ENCODE measurements at regions of chr1 and their contacts with region 1.

Region 1: DNA sequence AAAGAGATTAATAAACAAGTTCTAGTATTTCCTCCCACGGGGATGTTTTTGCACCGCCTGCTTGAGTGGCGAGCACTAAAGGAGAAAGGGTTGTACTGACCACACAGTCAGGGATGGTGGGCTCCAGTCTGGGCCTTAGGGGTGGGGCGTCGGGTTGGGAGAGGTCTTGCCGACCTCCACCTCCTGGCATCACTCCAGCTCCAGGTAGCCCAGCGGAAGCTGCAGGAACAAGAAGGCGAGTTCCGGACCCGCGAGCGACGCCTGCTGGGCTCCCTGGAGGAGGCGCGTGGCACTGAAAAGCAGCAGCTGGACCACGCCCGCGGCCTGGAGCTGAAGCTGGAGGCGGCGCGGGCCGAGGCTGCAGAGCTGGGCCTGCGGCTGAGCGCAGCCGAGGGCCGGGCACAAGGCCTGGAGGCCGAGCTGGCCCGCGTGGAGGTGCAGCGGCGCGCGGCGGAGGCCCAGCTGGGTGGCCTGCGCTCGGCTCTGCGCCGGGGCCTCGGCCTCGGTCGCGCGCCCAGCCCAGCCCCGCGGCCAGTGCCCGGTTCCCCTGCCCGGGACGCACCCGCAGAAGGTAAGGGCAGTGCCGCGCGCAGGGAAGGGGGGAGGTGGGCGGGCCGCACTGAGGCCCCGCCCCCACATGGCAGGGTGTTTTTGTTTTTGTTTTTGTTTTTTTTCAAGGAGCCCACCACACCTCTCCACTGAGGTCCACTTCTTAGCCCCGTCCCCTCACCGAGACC is 19.7 kb downstream of the MFAP2 start:
- DNase-seq: peak; percentile 73
- H3K4me3 ChIP-seq: peak overlapping the region; percentile 26
- H3K27ac ChIP-seq: no peak overlapping the region
- H3K4me1 ChIP-seq: peaks cover 4% of the 10 kb centered on the region
- CTCF ChIP-seq: peak; percentile 74

Region 2: GRCh38 chr1:16921391-16922185 is 39.1 kb before region 1 on chr1 and contains the start of gene CROCC:
- CTCF ChIA-PET with region 1: interaction called, 5 read pairs
- POLR2A ChIA-PET with region 1: no interaction called
- intact Hi-C with region 1: loop called (anchors 2 kb)
- DNase-seq: peak; percentile 82
- H3K4me3 ChIP-seq: peak within 1 kb of the TSS; percentile 76
- H3K27ac ChIP-seq: peak within 1 kb of the TSS; percentile 40
- H3K4me1 ChIP-seq: peaks cover 17% of the 10 kb centered on the region
- CTCF ChIP-seq: peak; percentile 57
- total RNA-seq, gene CROCC: 36.3 and 57.9 TPM in 2 replicates

Region 3: GRCh38 chr1:17030206-17030605 is 69.5 kb after region 1 on chr1:
- CTCF ChIA-PET with region 1: no interaction called
- POLR2A ChIA-PET with region 1: no interaction called
- intact Hi-C with region 1: loop called (anchors 5 kb)
- DNase-seq: no peak
- H3K4me3 ChIP-seq: no peak overlapping the region
- H3K27ac ChIP-seq: no peak overlapping the region
- H3K4me1 ChIP-seq: no peaks in the 10 kb centered on the region
- CTCF ChIP-seq: no peak

Measured in OCI-LY7 (cell line).